HEK293T (cell line): ENCODE measurements at regions of chr11 and their contacts with region 1.

Region 1: GRCh38 chr11:93652161-93652597 is 9.3 kb upstream of the CEP295 start:
- DNase-seq: peak; percentile 49

Region 2: DNA sequence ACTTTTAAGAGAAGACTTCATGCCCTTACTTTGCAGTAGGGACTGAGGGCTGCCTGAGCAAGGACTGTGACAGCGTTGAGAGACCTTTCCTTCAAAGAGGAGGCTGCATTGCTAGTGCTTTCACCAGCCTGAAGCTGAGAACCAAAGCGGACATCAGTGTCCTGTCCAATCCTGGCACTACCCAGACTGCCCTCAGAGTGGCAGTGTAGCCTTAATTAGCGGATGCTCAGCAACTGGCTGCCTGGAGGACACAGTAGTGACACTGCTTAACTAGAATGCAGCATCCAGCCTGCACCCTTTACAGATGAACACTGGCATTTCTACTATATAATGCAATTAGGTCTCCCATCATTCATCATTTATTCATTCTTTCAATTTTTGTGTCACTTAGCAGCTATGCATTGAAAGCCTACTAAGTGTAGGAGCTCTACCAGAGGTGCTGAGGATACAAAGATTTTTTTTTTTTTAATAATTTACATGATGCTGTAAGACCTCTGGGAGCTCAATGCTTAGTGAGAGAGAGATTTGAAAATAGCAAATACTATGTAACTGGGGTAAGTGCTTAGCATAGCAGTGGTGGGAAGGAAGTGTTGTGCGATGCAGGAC is 417.5 kb before region 1 on chr11:
- CTCF ChIA-PET with region 1: interaction called, 11 read pairs
- POLR2A ChIA-PET with region 1: no interaction called
- DNase-seq: peak; percentile 77

Region 3: DNA sequence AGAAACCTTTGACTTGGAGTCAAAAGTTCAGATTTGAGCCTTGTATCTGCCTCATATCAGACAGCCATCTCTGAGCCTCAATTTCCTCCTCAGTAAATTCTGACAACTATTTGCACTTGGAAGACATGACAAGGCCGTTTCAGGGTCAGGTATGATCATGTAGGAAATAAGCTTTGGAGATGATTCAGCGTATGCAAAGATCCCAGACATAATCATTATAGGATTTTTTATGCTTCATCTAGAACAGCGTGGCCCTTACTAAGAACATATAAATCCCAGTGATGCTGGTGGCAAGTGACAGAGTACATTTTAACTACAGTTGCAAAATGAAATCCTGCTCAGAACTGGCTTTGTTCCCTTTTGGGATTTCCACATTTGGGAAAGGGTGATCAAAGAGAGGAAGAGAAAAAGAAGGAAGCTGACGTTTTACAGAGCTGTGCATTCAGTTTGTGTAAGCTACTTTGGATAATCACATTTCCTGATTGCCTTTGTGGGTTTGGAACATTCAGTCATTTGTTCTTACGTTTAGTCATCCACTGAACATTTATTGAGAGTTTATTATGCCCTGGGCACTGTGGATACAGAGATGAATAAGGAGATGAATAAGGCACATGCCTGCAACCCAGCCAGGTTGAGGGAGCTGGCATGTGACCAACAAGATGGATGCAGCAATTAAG is 287.0 kb after region 1 on chr11:
- CTCF ChIA-PET with region 1: no interaction called
- POLR2A ChIA-PET with region 1: no interaction called
- DNase-seq: no peak